ENCODE measurements at regions of chr5 and their contacts with region 1.

Region 1: GRCh38 chr5:171342362-171343111 is 33.5 kb downstream of the TLX3 start:
- DNase-seq: peak in 1 of 2 experiments; percentile 56
- H3K4me3 ChIP-seq: no peak overlapping the region
- H3K27ac ChIP-seq: no peak overlapping the region
- H3K4me1 ChIP-seq: no peaks in the 10 kb centered on the region
- H3K27me3 ChIP-seq: peaks cover 0 to 4% (median 2%) of the 10 kb centered on the region in 4 experiments; a peak in 3 of 7 replicates
- CTCF ChIP-seq: peak in 2 of 3 experiments; percentile 78 to 81; a peak in 3 of 4 replicates
- EP300 ChIP-seq: no peak
- POLR2A ChIP-seq: no peak
- RAD21 ChIP-seq: peak; percentile 84

Region 2: DNA sequence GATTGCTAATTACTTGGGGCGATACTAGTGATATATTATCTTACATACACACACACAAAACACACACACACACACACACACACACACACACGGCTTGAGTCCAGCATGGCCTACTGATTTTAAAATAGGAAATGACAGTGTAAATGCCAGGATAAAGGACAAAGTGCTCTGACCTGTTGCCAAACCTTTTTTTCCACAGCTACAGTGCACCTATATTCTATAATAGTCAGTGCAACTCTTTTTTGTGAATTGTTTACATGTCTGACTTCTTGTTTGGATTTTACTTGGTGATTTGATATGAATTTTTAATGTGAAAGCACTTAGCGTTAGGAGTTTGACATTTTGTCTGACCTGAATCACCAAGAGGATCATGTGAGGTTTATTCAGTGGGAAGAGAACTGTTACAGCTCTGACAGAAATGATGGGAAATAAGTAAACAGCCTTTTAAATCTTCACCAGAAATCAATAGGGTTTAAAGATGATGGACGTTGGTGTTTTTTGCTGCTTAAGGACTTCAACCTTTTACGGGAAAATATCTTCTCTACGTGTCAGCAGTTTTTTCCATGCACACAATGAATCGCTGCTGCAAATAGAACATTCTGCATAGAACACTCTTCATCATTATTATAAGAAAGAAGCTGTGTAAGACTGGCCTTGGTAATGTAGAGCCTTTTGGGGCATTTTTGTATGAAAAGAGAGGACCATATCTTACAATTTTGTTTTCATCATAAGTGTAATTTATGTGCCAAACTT is 262.2 kb before region 1 on chr5:
- CTCF ChIA-PET with region 1: no interaction called
- POLR2A ChIA-PET with region 1: no interaction called
- DNase-seq: no peak
- H3K4me3 ChIP-seq: no peak overlapping the region
- H3K27ac ChIP-seq: no peak overlapping the region
- H3K4me1 ChIP-seq: no peaks in the 10 kb centered on the region
- H3K27me3 ChIP-seq: no peaks in the 10 kb centered on the region
- CTCF ChIP-seq: no peak
- EP300 ChIP-seq: no peak
- POLR2A ChIP-seq: no peak
- RAD21 ChIP-seq: no peak

Region 3: GRCh38 chr5:171264843-171265242 is 77.7 kb before region 1 on chr5:
- CTCF ChIA-PET with region 1: interaction called, 11 read pairs
- POLR2A ChIA-PET with region 1: no interaction called
- DNase-seq: no peak
- H3K4me3 ChIP-seq: no peak overlapping the region
- H3K27ac ChIP-seq: no peak overlapping the region
- H3K4me1 ChIP-seq: no peaks in the 10 kb centered on the region
- H3K27me3 ChIP-seq: no peaks in the 10 kb centered on the region
- CTCF ChIP-seq: no peak
- EP300 ChIP-seq: no peak
- POLR2A ChIP-seq: no peak
- RAD21 ChIP-seq: no peak

Region 4: DNA sequence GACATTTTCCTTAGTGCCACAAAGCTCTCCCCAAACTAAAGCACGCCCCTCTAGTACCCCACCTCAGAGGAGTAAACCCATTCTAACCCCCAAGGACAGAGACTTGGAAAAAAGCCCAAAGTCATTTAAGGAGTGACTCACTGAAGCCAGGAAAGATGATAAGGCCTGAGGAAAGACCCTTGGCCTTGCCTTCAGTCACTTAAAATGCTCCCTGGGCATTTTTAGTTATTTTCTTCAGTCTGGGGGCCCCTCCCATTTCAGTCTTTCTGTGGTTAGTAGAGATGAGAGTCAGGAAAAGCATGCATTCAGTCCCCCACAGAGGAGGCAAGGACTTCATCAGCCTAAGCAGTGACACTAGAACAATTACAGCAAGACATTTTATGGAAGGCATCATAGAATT is 47.2 kb before region 1 on chr5:
- CTCF ChIA-PET with region 1: interaction called, 24 read pairs
- POLR2A ChIA-PET with region 1: no interaction called
- DNase-seq: no peak
- H3K4me3 ChIP-seq: no peak overlapping the region
- H3K27ac ChIP-seq: no peak overlapping the region
- H3K4me1 ChIP-seq: peaks cover 0 to 2% (median 0%) of the 10 kb centered on the region in 4 experiments; a peak in 1 of 7 replicates
- H3K27me3 ChIP-seq: no peaks in the 10 kb centered on the region; a peak in 2 of 7 replicates
- CTCF ChIP-seq: no peak
- EP300 ChIP-seq: no peak
- POLR2A ChIP-seq: no peak
- RAD21 ChIP-seq: no peak

Region 5: DNA sequence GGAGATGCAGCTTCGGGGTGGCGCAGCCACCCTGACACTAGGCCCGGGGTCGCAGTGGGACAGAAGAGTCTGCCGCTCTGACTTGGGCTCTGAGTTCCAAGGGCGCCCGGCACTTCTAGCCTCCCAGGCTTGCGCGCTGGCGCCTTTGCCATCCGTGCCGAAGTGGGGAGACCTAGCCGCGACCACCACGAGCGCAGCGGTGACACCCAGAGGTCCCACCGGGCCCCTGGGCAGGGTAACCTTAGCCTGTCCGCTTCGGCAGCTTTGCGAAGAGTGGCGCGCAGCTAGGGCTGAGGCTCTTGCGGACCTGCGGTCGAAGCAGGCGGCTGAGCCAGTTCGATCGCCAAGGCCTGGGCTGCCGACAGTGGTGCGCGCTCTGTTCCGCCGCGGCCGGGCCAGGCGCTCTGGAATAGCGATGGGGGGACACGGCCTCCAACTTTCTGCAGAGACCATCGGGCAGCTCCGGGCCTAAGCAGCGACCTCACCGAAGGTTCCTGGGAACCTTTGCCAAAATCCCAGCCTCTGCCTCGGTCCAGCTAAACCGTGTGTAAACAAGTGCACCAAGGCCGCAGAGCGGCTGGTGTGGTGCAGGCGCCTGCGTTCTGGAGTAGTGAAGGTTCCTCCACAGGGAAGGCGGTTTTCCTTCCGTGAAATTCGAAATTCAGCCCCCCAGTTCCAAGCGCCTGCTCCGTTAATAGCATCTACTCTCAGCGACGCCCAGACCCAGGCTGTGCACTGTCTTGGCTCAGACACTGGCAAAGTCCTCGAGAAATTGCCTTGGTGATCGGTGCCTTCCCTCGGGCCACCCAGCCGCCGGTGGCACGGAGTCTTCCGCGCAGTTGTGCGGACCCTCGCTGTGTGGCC is 26.0 kb before region 1 on chr5:
- CTCF ChIA-PET with region 1: interaction called, 36 read pairs
- POLR2A ChIA-PET with region 1: no interaction called
- DNase-seq: peak in 1 of 2 experiments; percentile 68
- H3K4me3 ChIP-seq: peak overlapping the region in 2 of 4 experiments; percentile 5 to 21; a peak in 3 of 8 replicates
- H3K27ac ChIP-seq: no peak overlapping the region
- H3K4me1 ChIP-seq: peaks cover 0 to 31% (median 21%) of the 10 kb centered on the region in 4 experiments; a peak in 6 of 7 replicates
- H3K27me3 ChIP-seq: peaks cover 79 to 99% (median 97%) of the 10 kb centered on the region in 4 experiments
- CTCF ChIP-seq: no peak
- EP300 ChIP-seq: no peak
- POLR2A ChIP-seq: no peak
- RAD21 ChIP-seq: no peak

Region 6: GRCh38 chr5:171330021-171330420 is 12.5 kb before region 1 on chr5:
- CTCF ChIA-PET with region 1: interaction called, 44 read pairs
- POLR2A ChIA-PET with region 1: no interaction called
- DNase-seq: no peak
- H3K4me3 ChIP-seq: no peak overlapping the region
- H3K27ac ChIP-seq: no peak overlapping the region
- H3K4me1 ChIP-seq: no peaks in the 10 kb centered on the region
- H3K27me3 ChIP-seq: peaks cover 0 to 2% (median 0%) of the 10 kb centered on the region in 4 experiments; a peak in 4 of 7 replicates
- CTCF ChIP-seq: no peak
- EP300 ChIP-seq: no peak
- POLR2A ChIP-seq: no peak
- RAD21 ChIP-seq: no peak

Measured in H1 (cell line).